ENCODE measurements at regions of chr4 and their contacts with region 1.

Region 1: GRCh38 chr4:145180298-145181090 is at the start of gene OTUD4:
- DNase-seq: peak; percentile 87 to 97 (median 94)
- H3K4me3 ChIP-seq: peak within 1 kb of the TSS; percentile 63 to 94 (median 83)
- H3K27ac ChIP-seq: peak within 1 kb of the TSS; percentile 85 to 99 (median 95)
- H3K27me3 ChIP-seq: no peaks in the 10 kb centered on the region
- CTCF ChIP-seq: peak in 39 of 56 donors; percentile 7 to 59 (median 32)
- total RNA-seq, gene OTUD4: 33.5 to 84.1 (median 49.7) TPM

Region 2: DNA sequence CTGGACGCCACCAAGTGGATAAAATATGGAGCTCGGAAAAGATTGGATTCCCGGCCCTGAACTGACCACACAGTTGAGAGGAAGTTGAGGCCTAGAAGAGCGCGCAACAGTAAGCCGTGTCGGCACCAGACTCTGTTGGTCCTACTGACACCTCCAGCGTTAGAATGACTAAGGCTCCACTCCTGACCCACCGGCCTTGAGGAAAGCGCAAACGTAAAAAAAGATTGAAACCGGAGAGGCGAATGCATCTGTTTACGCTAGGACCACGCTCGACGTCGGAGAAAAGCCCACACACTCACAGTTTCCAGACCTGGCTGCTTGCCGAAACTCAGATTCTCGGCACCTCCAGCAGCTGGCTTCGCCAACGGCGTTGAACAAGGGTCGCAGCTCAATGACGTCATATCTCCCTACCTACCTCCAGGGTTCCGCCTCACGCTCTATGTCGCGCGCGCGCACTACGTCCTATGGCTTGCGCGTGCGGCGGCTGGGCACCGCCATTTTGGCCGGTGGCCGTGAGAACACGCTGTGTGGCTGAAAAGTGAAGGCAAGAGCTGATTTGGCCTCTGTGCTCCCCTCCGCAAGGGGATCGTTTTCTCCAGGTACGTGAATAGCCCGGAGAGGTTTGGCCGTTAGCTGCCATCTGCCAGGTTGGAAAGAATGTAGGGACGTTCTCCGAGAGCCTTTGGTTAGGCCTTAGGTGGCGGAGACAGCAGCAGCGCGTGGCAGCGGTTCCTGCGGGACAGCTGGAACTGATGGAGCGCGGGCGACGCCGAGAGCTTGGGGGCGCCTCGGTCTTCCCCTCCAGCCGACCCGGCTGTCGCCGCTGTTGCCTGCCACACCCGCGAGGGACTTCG is 82.4 kb before region 1 on chr4 and contains the starts of genes ABCE1 and ANAPC10:
- intact Hi-C with region 1: loop called in 1 of 2 experiments (anchors 2 kb)
- DNase-seq: peak; percentile 83 to 94 (median 93)
- H3K4me3 ChIP-seq: peak within 1 kb of the TSS; percentile 63 to 98 (median 87)
- H3K27ac ChIP-seq: peak within 1 kb of the TSS; percentile 68 to 98 (median 89)
- H3K27me3 ChIP-seq: no peaks in the 10 kb centered on the region
- CTCF ChIP-seq: peak in 51 of 56 donors; percentile 8 to 64 (median 39)
- total RNA-seq, gene ABCE1: 28.8 to 60.8 (median 41.8) TPM
- total RNA-seq, gene ANAPC10: 14.7 to 39.8 (median 28.3) TPM